ENCODE measurements at regions of chr10 and their contacts with region 1.

Region 1: DNA sequence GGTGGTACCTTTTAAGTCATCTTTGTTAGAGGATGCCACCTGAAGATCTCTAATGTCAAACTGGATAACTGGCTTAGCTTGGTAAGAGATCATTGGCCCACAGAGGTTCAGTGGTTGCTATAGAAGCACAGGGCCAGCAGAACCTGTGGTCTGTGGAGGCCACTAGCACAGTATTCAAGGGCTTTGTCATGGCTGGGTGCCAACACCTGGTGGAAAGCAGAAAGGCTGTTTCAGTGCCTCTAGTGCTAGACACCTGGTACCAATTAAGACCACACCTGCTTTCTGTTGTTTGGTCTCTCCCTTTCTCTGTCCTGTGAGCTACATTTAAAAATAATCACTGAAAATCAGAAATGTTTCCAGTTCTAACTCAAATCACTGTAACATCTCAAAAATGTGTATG is 10.0 kb upstream of the PCGF5 start:
- DNase-seq: no peak
- ATAC-seq: peak; percentile 56
- H3K4me3 ChIP-seq: no peak overlapping the region
- H3K4me3 Mint-ChIP-seq: peak overlapping the region in 1 of 10 donors; percentile 11
- H3K27ac ChIP-seq: no peak overlapping the region
- H3K27ac Mint-ChIP-seq: peak overlapping the region in 4 of 9 donors; percentile 29 to 62 (median 45)
- H3K4me1 ChIP-seq: peaks cover 11 to 25% of the 10 kb centered on the region in 2 donors
- H3K4me1 Mint-ChIP-seq: peaks cover 40 to 79% (median 66%) of the 10 kb centered on the region in 7 donors
- H3K27me3 ChIP-seq: no peaks in the 10 kb centered on the region
- H3K27me3 Mint-ChIP-seq: no peaks in the 10 kb centered on the region

Region 2: GRCh38 chr10:91198781-91199180 is 11.7 kb before region 1 on chr10:
- CTCF ChIA-PET with region 1: interaction called, 3 read pairs
- POLR2A ChIA-PET with region 1: interaction called, 3 read pairs
- intact Hi-C with region 1: loop called in 1 of 2 experiments (anchors 1 kb)
- DNase-seq: peak in 5 of 9 donors; percentile 21 to 45 (median 28)
- ATAC-seq: peak; percentile 55
- H3K4me3 ChIP-seq: no peak overlapping the region
- H3K4me3 Mint-ChIP-seq: peak overlapping the region in 8 of 10 donors; percentile 9 to 82 (median 54)
- H3K27ac ChIP-seq: peak overlapping the region; percentile 59
- H3K27ac Mint-ChIP-seq: peak overlapping the region; percentile 44 to 94 (median 86)
- H3K4me1 ChIP-seq: peaks cover 55 to 57% of the 10 kb centered on the region in 2 donors
- H3K4me1 Mint-ChIP-seq: peaks cover 55 to 91% (median 86%) of the 10 kb centered on the region in 7 donors
- H3K27me3 ChIP-seq: no peaks in the 10 kb centered on the region
- H3K27me3 Mint-ChIP-seq: no peaks in the 10 kb centered on the region

Region 3: GRCh38 chr10:91227576-91227975 is 17.1 kb after region 1 on chr10:
- CTCF ChIA-PET with region 1: no interaction called
- POLR2A ChIA-PET with region 1: no interaction called
- intact Hi-C with region 1: no loop called
- DNase-seq: no peak
- ATAC-seq: no peak
- H3K4me3 ChIP-seq: no peak overlapping the region
- H3K4me3 Mint-ChIP-seq: peak overlapping the region in 2 of 10 donors; percentile 2 to 35
- H3K27ac ChIP-seq: no peak overlapping the region
- H3K27ac Mint-ChIP-seq: peak overlapping the region in 2 of 9 donors; percentile 11 to 68
- H3K4me1 ChIP-seq: peaks cover 14 to 21% of the 10 kb centered on the region in 2 donors
- H3K4me1 Mint-ChIP-seq: peaks cover 30 to 58% (median 47%) of the 10 kb centered on the region in 7 donors
- H3K27me3 ChIP-seq: no peaks in the 10 kb centered on the region
- H3K27me3 Mint-ChIP-seq: no peaks in the 10 kb centered on the region

Measured in naive thymus-derived CD4-positive, alpha-beta T cell (primary cell).